Activated CD8-positive, alpha-beta T cell treated with anti-CD3 and anti-CD28 coated beads for 36 hours (primary cell): ENCODE measurements at regions of chr18 and their contacts with region 1.

Region 1: DNA sequence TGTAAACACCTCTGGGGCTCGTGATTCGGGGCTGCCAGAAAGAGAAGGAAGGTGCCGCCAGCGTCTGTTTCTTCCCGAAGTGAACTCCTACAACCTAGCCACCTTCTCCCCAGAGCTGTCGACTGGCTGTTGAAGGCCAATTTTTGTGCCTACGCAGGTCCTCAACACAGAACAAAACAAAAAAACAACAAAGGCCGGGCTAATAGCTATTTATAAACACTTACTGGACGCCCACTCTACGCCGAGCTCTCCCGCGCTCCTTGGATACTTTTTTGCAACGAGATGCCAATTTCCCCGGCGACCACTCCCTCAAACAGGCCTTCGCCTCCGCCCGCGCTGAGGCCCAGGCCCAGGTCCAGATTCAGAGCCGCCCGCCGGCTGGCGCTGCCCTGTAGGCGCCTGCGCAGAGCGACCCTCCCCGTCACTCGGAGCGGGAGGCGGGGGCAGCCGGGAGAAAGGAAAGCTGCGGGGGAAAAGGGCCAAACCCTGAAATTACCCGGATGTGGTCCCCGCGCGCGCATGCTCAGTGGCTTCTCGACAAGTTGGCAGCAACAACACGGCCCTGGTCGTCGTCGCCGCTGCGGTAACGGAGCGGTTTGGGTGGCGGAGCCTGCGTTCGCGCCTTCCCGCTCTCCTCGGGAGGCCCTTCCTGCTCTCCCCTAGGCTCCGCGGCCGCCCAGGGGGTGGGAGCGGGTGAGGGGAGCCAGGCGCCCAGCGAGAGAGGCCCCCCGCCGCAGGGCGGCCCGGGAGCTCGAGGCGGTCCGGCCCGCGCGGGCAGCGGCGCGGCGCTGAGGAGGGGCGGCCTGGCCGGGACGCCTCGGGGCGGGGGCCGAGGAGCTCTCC is at the start of gene SMAD4:
- DNase-seq: peak; percentile 97
- ATAC-seq: peak; percentile 88
- H3K4me3 Mint-ChIP-seq: peak within 1 kb of the TSS; percentile 98
- H3K27ac Mint-ChIP-seq: peak within 1 kb of the TSS; percentile 97
- H3K4me1 Mint-ChIP-seq: peaks cover 51% of the 10 kb centered on the region
- H3K27me3 Mint-ChIP-seq: no peaks in the 10 kb centered on the region
- CTCF ChIP-seq: no peak
- total RNA-seq, gene SMAD4: 68.1 to 71.2 TPM

Region 2: GRCh38 chr18:50878345-50879301 is 151.3 kb before region 1 on chr18 and contains the start of gene ME2:
- CTCF ChIA-PET with region 1: interaction called, 3 read pairs
- POLR2A ChIA-PET with region 1: interaction called, 12 read pairs
- intact Hi-C with region 1: loop called (anchors 10 kb)
- DNase-seq: peak; percentile 91
- ATAC-seq: peak; percentile 96
- H3K4me3 Mint-ChIP-seq: peak within 1 kb of the TSS; percentile 91
- H3K27ac Mint-ChIP-seq: peak within 1 kb of the TSS; percentile 98
- H3K4me1 Mint-ChIP-seq: peaks cover 20% of the 10 kb centered on the region
- H3K27me3 Mint-ChIP-seq: peaks cover under 1% of the 10 kb centered on the region
- CTCF ChIP-seq: no peak
- total RNA-seq, gene ME2: 138 to 141 TPM

Region 3: DNA sequence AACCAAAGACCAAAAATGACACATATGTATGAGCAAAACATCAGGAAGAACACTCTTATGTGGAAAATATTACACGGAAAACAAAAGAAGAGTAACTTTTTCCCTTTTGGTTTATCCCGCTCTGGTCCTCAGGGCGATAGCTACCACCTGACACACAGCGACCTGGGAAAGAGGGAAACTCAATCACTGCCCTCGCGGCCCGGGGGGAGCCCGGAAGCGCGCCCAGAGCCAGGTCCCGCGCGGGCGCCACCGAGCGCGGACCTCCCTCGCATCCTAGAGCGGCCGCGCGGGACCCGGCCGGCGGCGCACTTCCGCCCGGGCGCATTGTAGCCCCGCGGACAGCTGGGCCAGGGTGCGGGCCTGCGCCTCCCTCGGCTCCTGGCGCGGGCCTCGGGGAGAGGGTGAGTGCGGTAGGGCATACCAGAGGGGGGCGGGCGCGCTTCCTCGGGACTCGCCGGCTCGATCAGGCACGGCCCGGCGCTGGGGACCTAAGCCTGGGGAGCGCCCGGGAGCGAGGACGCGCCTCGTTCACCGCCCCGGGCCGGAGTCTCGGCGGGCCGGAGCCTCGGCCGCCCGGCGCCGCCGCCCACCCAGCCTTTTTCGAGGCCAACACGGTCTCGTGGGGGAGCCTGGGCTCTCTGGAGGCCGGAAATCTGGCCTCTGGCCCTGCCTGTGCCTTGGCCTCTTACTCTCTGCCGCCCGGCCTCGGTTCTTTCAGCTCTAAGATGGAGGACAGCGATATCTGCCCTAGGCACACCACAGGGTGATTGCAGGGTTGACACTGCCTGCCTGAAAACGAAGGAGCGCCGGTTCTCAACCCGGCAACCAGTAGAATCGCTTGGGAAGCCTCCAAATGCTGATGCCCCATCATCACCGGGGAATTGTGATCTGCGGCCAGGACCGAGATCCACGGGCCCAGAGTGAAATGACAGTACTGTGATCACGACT is 61.9 kb before region 1 on chr18 and contains the start of gene ELAC1:
- CTCF ChIA-PET with region 1: interaction called, 3 read pairs
- POLR2A ChIA-PET with region 1: interaction called, 18 read pairs
- intact Hi-C with region 1: loop called (anchors 5 kb)
- DNase-seq: peak; percentile 65
- ATAC-seq: peak; percentile 95
- H3K4me3 Mint-ChIP-seq: peak within 1 kb of the TSS; percentile 84
- H3K27ac Mint-ChIP-seq: peak within 1 kb of the TSS; percentile 94
- H3K4me1 Mint-ChIP-seq: peaks cover 24% of the 10 kb centered on the region
- H3K27me3 Mint-ChIP-seq: no peaks in the 10 kb centered on the region
- CTCF ChIP-seq: no peak
- total RNA-seq, gene ELAC1: 5.1 to 5.4 TPM

Region 4: DNA sequence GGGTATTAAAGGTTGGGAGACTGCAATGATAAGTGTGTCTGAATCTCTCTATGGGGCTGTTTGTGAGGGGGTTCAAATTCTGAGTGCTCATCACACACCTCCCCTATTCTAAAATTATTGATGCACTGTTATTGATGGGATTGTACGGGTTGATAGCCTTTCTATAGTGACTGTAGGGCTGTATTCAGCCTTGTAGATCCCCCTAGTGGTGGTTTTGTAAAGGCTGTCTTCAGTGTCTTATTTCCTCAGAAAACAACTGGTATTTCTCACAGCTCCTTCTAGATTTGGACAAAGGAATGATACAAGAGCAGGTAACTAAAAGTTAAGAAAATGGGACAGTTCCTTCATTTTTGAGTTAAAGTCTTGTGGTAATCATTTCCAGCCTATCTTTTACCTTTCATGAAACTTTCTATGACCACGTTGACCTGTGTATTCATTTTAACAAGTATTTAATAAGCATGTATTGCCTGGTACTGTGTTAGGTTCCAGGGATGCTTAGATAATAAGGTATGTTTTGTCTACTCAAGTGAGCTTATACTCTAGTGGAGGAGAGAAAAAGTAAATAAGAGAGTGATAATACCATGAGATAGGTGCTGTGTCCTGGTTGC is 21.3 kb after region 1 on chr18:
- CTCF ChIA-PET with region 1: interaction called, 55 read pairs
- POLR2A ChIA-PET with region 1: interaction called, 7 read pairs
- intact Hi-C with region 1: no loop called
- DNase-seq: no peak
- ATAC-seq: peak; percentile 90
- H3K4me3 Mint-ChIP-seq: no peak overlapping the region
- H3K27ac Mint-ChIP-seq: no peak overlapping the region
- H3K4me1 Mint-ChIP-seq: peaks cover 38% of the 10 kb centered on the region
- H3K27me3 Mint-ChIP-seq: no peaks in the 10 kb centered on the region
- CTCF ChIP-seq: peak; percentile 78